ENCODE measurements at regions of chr2 and their contacts with region 1.

Region 1: GRCh38 chr2:224938651-224939182 is 103.6 kb downstream of the DOCK10 start:
- DNase-seq: no peak
- CTCF ChIP-seq: no peak

Region 2: DNA sequence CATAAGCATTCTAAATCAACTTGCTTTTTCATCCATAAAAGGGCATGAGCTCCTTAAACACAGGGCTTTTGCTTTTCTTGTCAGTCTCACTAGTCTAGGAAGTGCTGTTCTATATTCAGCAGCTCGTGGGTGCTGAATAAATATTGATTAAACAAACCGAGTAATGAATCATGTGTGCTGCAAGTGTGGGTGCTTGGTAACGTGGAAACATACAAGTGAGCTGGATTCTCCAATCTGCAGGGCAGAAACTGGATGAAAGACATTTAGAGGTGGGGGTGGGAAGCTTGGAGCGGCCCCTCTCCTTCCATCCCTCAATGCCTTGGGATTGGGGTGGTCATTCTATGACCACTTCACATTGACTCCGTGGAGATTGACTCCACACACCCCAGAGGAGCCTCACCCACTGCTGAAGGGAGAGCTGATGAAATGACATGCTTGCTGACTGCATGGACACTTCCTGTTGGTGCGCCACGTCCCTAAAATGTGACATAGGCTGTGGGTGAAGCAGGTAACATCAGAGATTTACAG is 11.0 kb before region 1 on chr2:
- CTCF ChIA-PET with region 1: interaction called, 20 read pairs
- POLR2A ChIA-PET with region 1: no interaction called
- DNase-seq: no peak
- CTCF ChIP-seq: no peak

Measured in GM10248 (cell line).